K562 (cell line): ENCODE measurements at regions of chr16 and their contacts with region 1.

Region 1: DNA sequence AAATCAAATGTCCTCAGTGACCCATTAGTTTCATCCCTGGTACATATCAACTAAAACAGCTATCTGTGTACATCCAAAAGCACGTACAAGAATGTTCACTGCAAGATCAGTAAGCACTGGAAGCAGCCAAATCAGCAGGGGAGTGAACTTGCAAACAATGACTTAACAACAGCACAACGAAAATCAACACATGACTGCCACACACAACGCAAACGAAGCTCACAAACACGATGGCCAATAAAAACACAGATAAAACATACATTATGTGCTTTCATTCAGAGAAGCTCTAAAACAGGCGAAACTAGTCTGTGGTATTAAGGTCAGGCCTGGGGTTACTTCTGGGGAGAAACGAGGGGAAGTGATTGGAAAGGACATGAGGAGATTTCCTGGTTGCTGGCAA is 60.6 kb downstream of the XPO6 start:
- DNase-seq: no peak
- ATAC-seq: no peak
- H3K4me3 ChIP-seq: no peak overlapping the region
- H3K27ac ChIP-seq: no peak overlapping the region
- H3K4me1 ChIP-seq: no peaks in the 10 kb centered on the region
- H3K27me3 ChIP-seq: no peaks in the 10 kb centered on the region
- CTCF ChIP-seq: no peak
- EP300 ChIP-seq: no peak
- POLR2A ChIP-seq: no peak
- RAD21 ChIP-seq: no peak

Region 2: DNA sequence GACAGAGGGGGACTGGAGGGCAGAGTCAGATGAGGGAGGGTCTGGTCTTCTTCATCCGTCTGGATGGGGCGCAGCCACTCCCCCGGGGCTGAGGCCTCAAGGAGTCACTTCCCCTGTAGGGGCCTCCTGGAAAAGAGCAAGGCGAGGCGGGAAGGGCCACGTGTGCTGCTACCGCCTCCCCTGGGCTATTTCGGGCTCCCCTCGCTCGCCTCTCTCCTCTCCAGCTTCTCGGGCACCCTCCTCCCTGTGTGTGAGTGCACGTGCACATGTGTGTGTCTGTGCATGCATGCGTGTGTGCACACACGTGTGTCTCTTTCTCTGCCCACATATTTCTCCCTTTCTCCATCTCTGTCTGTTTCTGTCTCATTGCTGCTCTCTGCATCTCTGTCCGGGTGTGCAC is 97.7 kb before region 1 on chr16:
- CTCF ChIA-PET with region 1: no interaction called
- POLR2A ChIA-PET with region 1: no interaction called
- in situ Hi-C with region 1: no loop called
- intact Hi-C with region 1: no loop called
- DNase-seq: no peak
- ATAC-seq: no peak; the same call in 2 of the 3 replicates
- H3K4me3 ChIP-seq: no peak overlapping the region
- H3K27ac ChIP-seq: no peak overlapping the region
- H3K4me1 ChIP-seq: no peaks in the 10 kb centered on the region; a peak in 1 of 5 replicates
- H3K27me3 ChIP-seq: peaks cover 10 to 33% of the 10 kb centered on the region in 2 experiments; a peak in 4 of 5 replicates
- CTCF ChIP-seq: no peak
- EP300 ChIP-seq: no peak
- POLR2A ChIP-seq: no peak
- RAD21 ChIP-seq: no peak

Region 3: GRCh38 chr16:28140788-28141618 is 10.2 kb before region 1 on chr16:
- CTCF ChIA-PET with region 1: no interaction called
- POLR2A ChIA-PET with region 1: interaction called, 10 read pairs
- in situ Hi-C with region 1: no loop called
- intact Hi-C with region 1: no loop called
- DNase-seq: no peak
- ATAC-seq: peak; percentile 40
- H3K4me3 ChIP-seq: no peak overlapping the region
- H3K27ac ChIP-seq: peak overlapping the region; percentile 55; the same call in 2 of the 3 replicates
- H3K4me1 ChIP-seq: peaks cover 0 to 10% of the 10 kb centered on the region in 2 experiments; a peak in 2 of 5 replicates
- H3K27me3 ChIP-seq: no peaks in the 10 kb centered on the region
- CTCF ChIP-seq: no peak
- EP300 ChIP-seq: no peak
- POLR2A ChIP-seq: no peak
- RAD21 ChIP-seq: no peak

Region 4: GRCh38 chr16:29112755-29113347 is 961.6 kb after region 1 on chr16:
- CTCF ChIA-PET with region 1: no interaction called
- POLR2A ChIA-PET with region 1: no interaction called
- in situ Hi-C with region 1: no loop called
- intact Hi-C with region 1: no loop called
- DNase-seq: no peak
- ATAC-seq: no peak
- H3K4me3 ChIP-seq: no peak overlapping the region
- H3K27ac ChIP-seq: no peak overlapping the region
- H3K4me1 ChIP-seq: peaks cover 3 to 13% of the 10 kb centered on the region in 2 experiments; a peak in 4 of 5 replicates
- H3K27me3 ChIP-seq: peaks cover 11 to 23% of the 10 kb centered on the region in 2 experiments
- CTCF ChIP-seq: no peak
- EP300 ChIP-seq: no peak
- POLR2A ChIP-seq: no peak
- RAD21 ChIP-seq: 0 out of 4 replicates have a peak, but pooled peaks of 1 of the 2 experiments have one; percentile 5